Naive thymus-derived CD8-positive, alpha-beta T cell (primary cell): ENCODE measurements at regions of chr11 and their contacts with region 1.

Region 1: DNA sequence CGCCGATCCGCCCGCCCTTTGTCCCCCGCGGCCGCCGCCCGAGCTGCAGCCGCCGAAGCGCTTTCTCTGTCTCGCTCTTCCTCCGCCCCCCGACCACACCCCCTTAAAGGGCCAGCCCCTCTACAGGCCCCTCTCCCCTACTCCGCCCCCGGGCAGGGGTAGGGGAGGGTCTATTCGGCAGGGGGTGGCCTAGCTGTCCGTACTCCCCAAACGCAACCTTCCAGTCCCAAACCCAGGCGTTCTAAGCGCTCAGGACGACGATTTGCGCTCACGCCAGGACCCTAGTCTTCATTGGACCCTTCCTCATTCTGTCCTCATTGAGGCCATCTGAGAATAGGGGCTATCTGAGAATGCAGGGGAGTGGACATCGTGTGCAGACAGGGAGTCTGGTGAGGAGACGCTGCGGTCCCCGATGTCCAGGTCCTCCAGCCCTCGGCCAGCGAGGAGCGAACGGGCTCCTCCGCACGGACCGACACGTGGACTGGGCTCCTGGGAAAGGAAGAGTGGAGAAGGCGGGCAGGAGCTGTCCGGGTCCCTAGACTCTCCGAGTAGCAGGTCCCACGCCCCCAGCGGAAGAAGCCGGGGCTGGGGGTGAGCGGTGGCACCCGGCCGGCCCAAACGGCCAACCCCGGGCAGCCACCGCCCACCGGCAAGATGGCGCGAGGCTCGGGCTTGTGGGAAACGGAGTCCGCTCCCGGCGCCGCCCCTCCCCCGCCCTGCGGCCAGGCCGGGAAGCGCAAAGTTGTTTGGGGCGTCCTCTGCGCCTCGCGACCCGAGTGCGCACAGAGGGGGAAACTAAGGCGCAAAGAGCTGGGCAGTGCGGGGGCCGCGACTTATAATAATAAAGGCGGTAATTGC is at the start of gene PPP1R14B:
- DNase-seq: peak; percentile 57 to 87 (median 71)
- ATAC-seq: peak; percentile 65 to 69
- H3K4me3 Mint-ChIP-seq: peak within 1 kb of the TSS; percentile 79 to 92 (median 88)
- H3K27ac Mint-ChIP-seq: peak within 1 kb of the TSS; percentile 13 to 93 (median 82)
- H3K4me1 Mint-ChIP-seq: peaks cover 18 to 53% (median 48%) of the 10 kb centered on the region in 4 donors
- H3K27me3 Mint-ChIP-seq: no peaks in the 10 kb centered on the region
- polyA plus RNA-seq, gene PPP1R14B: 22.4 to 50.6 (median 45.4) TPM

Region 2: DNA sequence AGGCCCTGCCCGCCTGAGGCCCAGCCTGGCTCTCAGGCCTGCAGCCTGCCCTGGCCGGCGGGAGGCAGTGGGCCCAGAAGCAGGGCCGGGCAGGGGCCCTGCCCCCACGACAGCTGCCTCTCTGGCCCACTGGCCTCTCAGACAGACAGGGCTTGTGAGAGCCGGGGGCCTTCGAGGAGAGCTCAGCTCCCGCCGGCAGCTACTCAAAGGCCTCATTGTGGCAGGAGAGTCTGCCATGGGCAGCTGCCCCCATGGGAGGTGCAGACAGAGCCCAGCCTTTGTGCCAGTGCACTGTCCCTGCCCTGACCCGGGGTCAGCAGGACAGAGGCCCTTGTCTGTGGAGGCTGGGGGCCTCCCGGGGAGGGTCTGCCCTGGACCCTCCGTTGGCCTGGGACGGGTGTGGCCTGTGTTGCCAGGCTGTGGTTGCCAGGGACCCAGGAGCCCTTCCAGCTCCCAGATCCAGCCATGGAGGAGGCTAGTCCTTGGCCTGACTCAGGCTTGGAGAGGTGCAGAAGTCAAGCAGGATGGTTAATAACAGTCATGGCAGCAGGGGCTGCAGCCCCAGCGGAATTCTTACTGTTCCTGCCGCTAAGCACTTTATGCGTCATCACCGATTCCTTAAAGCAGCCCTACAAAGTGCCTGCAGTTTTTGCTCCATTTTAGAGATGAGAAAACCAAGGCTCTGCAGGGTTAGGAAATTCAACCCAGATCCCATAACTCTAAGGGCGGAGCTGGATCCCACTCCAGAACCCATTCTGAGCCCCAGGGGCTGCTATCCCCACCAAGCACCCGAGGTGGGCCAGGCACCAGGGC is 198.9 kb before region 1 on chr11:
- POLR2A ChIA-PET with region 1: no interaction called
- DNase-seq: no peak
- ATAC-seq: no peak
- H3K4me3 Mint-ChIP-seq: no peak overlapping the region
- H3K27ac Mint-ChIP-seq: no peak overlapping the region
- H3K4me1 Mint-ChIP-seq: no peaks in the 10 kb centered on the region
- H3K27me3 Mint-ChIP-seq: no peaks in the 10 kb centered on the region

Region 3: DNA sequence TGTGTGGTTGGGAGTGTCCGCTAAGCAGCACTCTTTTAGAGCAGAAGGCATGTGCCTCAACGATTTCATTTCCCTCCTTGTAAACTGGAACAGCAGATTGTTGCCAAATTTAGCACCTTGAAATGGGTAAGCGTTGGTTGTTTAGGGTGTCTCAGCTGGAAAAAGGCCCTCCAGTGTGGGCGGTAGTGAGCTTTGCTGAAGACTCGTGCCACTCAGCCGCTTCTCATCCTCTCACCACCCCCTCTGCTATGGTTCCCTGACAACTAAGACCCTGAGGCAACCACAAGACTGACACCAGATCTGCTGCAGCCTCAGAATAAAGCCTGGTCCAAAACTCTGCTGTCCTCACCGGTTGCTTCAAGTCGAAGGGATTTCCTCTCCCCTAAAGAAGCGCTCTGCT is 50.5 kb before region 1 on chr11:
- POLR2A ChIA-PET with region 1: no interaction called
- DNase-seq: no peak
- ATAC-seq: no peak
- H3K4me3 Mint-ChIP-seq: no peak overlapping the region
- H3K27ac Mint-ChIP-seq: peak overlapping the region in 3 of 10 donors; percentile 16 to 75 (median 40)
- H3K4me1 Mint-ChIP-seq: peaks cover 10 to 26% (median 12%) of the 10 kb centered on the region in 4 donors
- H3K27me3 Mint-ChIP-seq: no peaks in the 10 kb centered on the region

Region 4: DNA sequence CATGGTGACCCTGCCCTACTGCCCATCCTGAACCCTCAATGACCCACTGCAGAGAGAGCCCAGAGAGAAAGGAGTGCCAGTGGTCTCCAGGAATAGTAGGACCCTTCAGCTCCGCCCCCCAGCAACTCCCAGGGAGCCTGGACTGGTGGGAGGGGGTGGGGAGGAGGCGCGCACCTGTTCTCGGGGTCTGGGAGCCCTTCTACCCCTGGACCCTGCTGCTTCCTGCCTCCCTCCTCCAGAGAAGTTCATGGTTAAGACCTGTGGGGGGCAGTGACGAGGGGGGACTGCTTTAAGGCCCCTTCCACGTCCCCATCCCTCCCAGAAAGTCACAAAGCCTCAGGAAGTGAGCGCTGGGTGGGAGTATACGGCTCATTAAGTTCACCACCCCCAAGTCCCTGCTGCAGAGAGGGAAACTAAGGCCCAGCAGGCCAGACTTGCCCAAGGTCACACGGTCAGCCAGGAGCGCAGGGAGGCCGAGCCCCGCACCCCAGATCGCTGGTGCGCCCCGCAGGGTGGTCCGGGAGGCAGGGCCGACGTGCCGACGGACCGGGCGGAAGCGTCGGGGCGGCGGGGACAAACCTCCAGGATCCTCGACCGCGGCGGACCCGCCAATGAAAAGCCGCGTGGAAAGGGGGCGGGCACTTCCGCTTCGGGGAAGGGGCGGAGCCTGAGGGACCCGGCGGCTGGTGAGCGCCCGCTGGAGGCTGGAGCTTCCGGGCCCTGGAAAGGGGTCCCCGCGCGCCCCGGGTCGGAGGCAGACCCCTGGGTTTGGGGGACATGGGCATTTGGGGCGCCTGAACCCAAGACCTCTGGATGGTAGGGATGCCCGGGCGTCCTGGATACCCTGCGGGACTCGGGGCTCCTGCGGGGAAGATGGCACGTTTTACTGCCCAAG is 21.2 kb before region 1 on chr11 and contains the starts of genes NUDT22 and TRPT1:
- POLR2A ChIA-PET with region 1: interaction called, 106 read pairs
- DNase-seq: peak; percentile 80 to 93 (median 85)
- ATAC-seq: peak; percentile 69 to 71
- H3K4me3 Mint-ChIP-seq: peak within 1 kb of the TSS; percentile 87 to 95 (median 90)
- H3K27ac Mint-ChIP-seq: peak within 1 kb of the TSS; percentile 83 to 97 (median 92)
- H3K4me1 Mint-ChIP-seq: peaks cover 17 to 41% (median 33%) of the 10 kb centered on the region in 4 donors
- H3K27me3 Mint-ChIP-seq: no peaks in the 10 kb centered on the region
- polyA plus RNA-seq, gene NUDT22: 43.4 to 50.4 (median 48.2) TPM
- polyA plus RNA-seq, gene TRPT1: 47.2 to 54.2 (median 51.4) TPM

Region 5: DNA sequence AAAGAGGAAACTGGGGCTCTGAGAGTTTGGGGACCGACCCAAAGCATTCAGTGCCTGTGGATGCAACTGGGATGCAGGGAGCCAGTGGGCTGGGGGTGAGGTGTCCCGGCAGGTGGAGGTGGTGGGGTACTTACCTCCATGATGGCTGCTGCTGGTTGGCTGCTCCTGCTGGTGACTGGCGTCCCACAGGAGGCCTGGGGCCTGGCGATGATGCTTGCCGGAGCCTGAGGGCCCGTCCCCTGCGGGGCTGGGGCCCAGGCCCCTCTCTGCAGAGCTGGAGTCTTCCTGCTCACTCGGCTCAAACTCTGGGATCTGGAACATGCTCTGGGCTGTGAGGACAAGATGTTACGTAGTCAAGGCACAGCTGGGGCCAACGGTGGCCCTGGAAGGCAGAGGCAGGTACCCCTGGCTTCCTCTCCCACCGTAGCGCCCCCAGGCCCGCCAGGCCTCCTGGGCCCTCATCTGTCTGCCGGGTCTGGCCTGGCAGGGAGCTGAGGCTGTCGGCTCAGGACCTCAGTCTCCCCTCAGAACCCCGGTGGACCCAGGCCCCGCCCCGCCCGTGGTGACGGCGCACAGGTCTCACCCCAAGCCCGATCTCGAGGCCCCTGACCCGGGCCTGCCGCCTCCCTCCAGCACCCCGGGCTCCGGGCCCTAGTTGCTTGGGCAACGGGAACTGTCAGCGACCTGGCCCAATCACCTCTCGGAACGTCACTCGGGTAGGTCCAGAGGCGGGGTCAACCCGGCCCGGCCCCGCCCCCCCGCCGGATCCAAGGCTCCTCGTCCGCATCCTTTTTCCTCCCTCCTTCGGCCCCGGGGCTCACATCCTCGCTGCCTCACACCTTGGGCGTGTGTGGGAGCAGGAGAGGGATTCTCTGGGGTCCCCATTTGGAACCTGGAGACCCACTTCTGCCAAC is 37.2 kb after region 1 on chr11 and contains the start of gene BAD:
- POLR2A ChIA-PET with region 1: interaction called, 17 read pairs
- DNase-seq: peak; percentile 86 to 96 (median 88)
- ATAC-seq: peak; percentile 78 to 79
- H3K4me3 Mint-ChIP-seq: peak within 1 kb of the TSS; percentile 85 to 94 (median 90)
- H3K27ac Mint-ChIP-seq: peak within 1 kb of the TSS; percentile 74 to 99 (median 97)
- H3K4me1 Mint-ChIP-seq: peaks cover 8 to 29% (median 21%) of the 10 kb centered on the region in 4 donors
- H3K27me3 Mint-ChIP-seq: no peaks in the 10 kb centered on the region
- polyA plus RNA-seq, gene BAD: 39.1 to 44.8 (median 39.9) TPM